Posterior cingulate gyrus (tissue), 11 donors: ENCODE measurements at regions of chr5 and their contacts with region 1.

Region 1: DNA sequence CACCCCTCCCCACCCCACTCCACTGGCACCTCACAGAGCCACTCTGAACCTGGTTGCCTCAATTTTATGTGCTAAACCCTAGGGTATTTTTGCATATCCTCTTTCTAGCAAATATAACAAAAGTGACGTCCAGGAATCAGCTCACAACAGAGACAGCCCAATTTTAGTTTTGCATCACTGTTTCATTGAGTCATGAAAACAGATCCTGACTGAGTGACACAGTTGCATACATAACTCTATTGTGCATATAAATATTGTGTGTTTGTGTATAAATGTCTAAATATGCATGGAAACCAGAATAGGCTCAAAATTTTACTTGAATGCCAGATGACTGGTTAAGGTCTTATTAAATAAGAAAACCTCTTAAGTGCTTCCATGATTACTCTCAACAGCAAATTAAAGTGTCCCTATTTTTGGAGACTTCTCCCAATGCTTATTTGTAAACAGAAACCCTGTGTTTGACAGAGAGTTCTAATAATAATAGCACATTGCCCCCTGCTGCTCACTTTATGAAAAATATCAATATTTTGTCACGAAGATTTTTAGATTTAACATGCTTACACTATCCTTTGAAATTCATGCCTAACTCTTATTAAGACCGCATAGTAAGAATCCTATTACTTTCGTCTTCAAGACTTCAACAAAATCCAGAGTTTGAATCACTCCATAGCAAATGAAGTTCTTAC is 75.5 kb upstream of the PRRC1 start:
- DNase-seq: no peak

Region 2: GRCh38 chr5:127400946-127401670 is 40.8 kb before region 1 on chr5:
- intact Hi-C with region 1: loop called (anchors 5 kb)
- DNase-seq: no peak

Region 3: GRCh38 chr5:127492854-127493738 is 51.2 kb after region 1 on chr5:
- intact Hi-C with region 1: loop called (anchors 5 kb)
- DNase-seq: no peak

Region 4: GRCh38 chr5:127723572-127723971 is 281.6 kb after region 1 on chr5:
- intact Hi-C with region 1: no loop called
- DNase-seq: no peak